Right ventricle myocardium superior (tissue), 1 donor: ENCODE measurements at regions of chr11 and their contacts with region 1.

Region 1: GRCh38 chr11:73965076-73965860 is 14.4 kb downstream of the DNAJB13 start:
- DNase-seq: peak; percentile 29
- ATAC-seq: peak; percentile 22

Region 2: GRCh38 chr11:73797457-73797856 is 167.8 kb before region 1 on chr11:
- intact Hi-C with region 1: no loop called
- DNase-seq: peak; percentile 64
- ATAC-seq: peak; percentile 81

Region 3: GRCh38 chr11:73878771-73879170 is 86.5 kb before region 1 on chr11:
- intact Hi-C with region 1: no loop called
- DNase-seq: no peak
- ATAC-seq: no peak

Region 4: GRCh38 chr11:74024261-74025029 is 59.2 kb after region 1 on chr11:
- intact Hi-C with region 1: loop called (anchors 10 kb)
- DNase-seq: peak; percentile 86
- ATAC-seq: peak; percentile 39

Region 5: GRCh38 chr11:74090701-74091100 is 125.4 kb after region 1 on chr11:
- intact Hi-C with region 1: loop called (anchors 10 kb)
- DNase-seq: no peak
- ATAC-seq: no peak

Region 6: DNA sequence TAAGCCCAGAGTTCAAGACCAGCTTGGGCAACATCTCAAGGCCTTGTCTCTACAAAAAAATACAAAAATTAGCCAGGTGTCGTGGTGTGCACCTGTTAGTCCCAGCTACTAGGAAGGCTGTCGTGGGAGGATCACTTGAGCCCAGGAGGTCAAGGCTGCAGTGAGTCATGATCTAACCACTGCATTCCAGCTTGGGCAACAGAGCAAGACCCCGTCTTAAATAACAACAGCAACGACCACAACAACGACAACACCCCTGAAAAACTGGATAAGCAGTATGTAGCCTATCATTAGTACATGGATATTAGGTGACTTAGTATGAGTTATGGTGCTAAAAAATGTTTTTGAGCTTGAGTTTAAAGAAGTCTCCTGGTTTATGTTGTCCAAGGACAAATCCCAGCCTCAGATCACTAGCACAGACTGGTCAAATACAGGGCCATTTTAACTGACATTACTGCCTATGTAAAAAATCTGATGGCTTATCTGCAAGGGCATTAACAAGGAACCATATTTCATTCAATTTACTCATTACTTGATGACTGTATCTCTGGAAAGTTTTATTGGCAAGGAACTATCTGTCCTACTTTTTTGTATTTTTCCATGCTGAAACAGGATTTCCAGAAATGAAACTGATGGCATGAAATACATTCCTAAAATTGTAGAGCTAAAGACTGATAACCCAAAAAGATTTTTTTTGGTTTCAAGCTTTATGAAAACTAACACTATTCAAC is 182.1 kb after region 1 on chr11:
- intact Hi-C with region 1: no loop called
- DNase-seq: no peak
- ATAC-seq: no peak

Region 7: GRCh38 chr11:74520927-74521665 is 555.8 kb after region 1 on chr11:
- intact Hi-C with region 1: no loop called
- DNase-seq: no peak
- ATAC-seq: no peak